ENCODE measurements at regions of chr16 and their contacts with region 1.

Region 1: GRCh38 chr16:87416826-87417527 is 24.8 kb downstream of the MAP1LC3B start:
- DNase-seq: no peak
- ATAC-seq: no peak
- H3K4me3 ChIP-seq: no peak overlapping the region
- H3K27ac ChIP-seq: no peak overlapping the region
- H3K4me1 ChIP-seq: no peaks in the 10 kb centered on the region
- H3K27me3 ChIP-seq: no peaks in the 10 kb centered on the region
- CTCF ChIP-seq: peak in 4 of 5 experiments; percentile 51 to 72 (median 64)
- POLR2A ChIP-seq: no peak

Region 2: GRCh38 chr16:87540945-87541877 is 124.2 kb after region 1 on chr16:
- in situ Hi-C with region 1: no loop called
- intact Hi-C with region 1: loop called (anchors 10 kb)
- DNase-seq: no peak
- ATAC-seq: no peak
- H3K4me3 ChIP-seq: peak overlapping the region in 2 of 4 donors; percentile 9 to 43
- H3K27ac ChIP-seq: peak overlapping the region in 3 of 4 donors; percentile 4 to 46 (median 28)
- H3K4me1 ChIP-seq: no peaks in the 10 kb centered on the region
- H3K27me3 ChIP-seq: peaks cover 18 to 43% (median 25%) of the 10 kb centered on the region in 3 donors
- CTCF ChIP-seq: no peak
- POLR2A ChIP-seq: no peak

Region 3: DNA sequence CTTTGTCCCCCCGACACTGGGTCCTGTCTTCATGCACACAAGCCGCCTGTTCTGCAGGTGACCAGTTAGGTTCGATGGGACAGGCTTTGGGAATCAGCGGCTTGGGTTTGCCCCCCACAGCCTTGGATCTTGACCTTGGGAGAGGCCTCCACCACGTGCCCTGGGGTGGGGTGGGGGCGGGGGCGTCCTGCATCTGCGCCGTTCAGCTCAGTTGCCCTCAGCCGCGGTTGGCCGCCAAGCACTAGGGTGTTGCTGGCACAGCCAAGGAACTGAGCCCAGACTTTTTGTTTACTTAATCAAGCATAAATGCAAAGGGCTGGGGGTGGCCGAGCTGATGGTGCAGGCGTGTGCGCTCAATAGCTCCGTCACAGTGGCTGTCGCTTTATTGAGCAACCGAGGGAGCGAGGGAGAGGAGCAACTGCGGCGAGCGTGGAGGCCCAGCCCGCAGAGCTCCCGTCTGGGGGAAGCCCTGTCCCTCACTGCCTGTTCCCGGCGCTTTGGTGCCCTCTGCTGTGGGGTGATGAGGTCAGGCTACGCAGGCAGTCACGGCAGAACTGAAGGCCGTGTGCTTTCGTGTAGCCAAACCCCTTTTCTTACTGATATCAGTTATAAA is 219.2 kb after region 1 on chr16:
- in situ Hi-C with region 1: loop called in 3 of 4 experiments (anchors 10 to 25 kb)
- intact Hi-C with region 1: loop called (anchors 5 kb)
- DNase-seq: peak; percentile 45 to 64
- ATAC-seq: peak; percentile 78 to 81
- H3K4me3 ChIP-seq: peak overlapping the region in 2 of 4 donors; percentile 1 to 20
- H3K27ac ChIP-seq: no peak overlapping the region
- H3K4me1 ChIP-seq: peaks cover 6 to 9% of the 10 kb centered on the region in 2 donors
- H3K27me3 ChIP-seq: peaks cover 8 to 14% (median 12%) of the 10 kb centered on the region in 3 donors
- CTCF ChIP-seq: peak; percentile 10 to 69 (median 59)
- POLR2A ChIP-seq: no peak

Region 4: DNA sequence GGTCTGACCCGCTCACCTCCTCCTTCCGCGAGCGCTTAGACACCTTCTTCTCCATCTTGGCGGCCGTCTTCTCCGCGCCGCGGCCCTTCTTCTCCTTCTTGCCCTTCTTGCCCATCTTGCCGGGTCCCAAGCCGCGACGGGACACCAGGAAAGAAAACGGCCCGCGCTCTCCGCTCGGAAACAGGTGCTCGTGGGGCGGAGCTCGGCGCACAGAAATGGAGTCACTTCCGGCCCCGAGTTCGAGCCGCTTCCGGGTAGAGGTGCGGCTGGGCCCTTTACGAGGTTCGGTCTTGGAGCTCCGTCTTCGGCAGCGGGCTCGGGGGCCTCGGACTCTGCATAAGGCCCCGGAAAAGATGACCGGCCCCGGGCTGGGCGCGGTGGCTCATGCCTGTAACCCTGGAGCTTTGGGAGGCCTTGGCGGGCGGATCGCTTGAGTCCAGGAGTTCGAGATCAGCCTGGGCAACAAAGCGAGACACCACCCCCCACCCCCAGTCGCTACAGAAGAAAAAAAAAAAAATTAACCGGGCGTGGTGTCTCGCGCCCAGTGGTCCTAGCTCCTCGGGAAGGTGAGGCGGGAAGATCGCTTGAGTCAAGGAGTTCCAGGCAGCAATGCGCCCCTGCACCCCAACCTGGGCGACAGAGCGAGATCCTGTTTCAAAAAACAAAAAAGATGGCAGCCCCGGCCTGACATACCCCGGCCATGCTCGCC is 349.0 kb after region 1 on chr16 and contains the start of gene KLHDC4:
- in situ Hi-C with region 1: no loop called
- intact Hi-C with region 1: loop called (anchors 5 kb)
- DNase-seq: peak; percentile 83 to 86
- ATAC-seq: peak; percentile 95
- H3K4me3 ChIP-seq: peak within 1 kb of the TSS; percentile 86 to 98 (median 94)
- H3K27ac ChIP-seq: peak within 1 kb of the TSS; percentile 88 to 95 (median 90)
- H3K4me1 ChIP-seq: peaks cover 5 to 8% of the 10 kb centered on the region in 2 donors
- H3K27me3 ChIP-seq: no peaks in the 10 kb centered on the region
- CTCF ChIP-seq: no peak
- POLR2A ChIP-seq: peak; percentile 68 to 85
- total RNA-seq, gene KLHDC4: 8.2 to 12.7 (median 10.4) TPM

Measured in gastrocnemius medialis (tissue), 4 donors.